ENCODE measurements at regions of chr12 and their contacts with region 1.

Region 1: DNA sequence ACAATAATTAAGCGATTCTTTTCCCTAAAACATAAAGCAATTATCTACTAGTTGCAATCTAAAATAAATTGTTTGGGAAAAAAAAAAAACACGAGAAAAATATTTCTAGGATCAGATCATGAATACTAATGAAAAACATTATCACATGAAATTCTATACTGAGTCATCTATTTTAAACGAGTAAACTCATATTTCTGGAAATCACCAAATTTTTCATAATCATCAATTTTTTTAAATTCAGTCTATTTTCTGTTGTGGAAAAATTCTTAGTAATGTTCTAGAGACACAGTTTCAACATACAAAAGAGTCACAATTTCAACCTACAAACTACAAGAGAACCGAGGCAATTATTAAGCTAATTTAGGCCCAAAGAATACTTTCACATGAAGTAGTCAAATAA is 245.6 kb upstream of the SOX5 start:
- DNase-seq: no peak
- ATAC-seq: no peak
- H3K4me3 ChIP-seq: no peak overlapping the region
- H3K27ac ChIP-seq: no peak overlapping the region
- H3K4me1 ChIP-seq: no peaks in the 10 kb centered on the region; the same call in 1 of the 2 replicates
- H3K27me3 ChIP-seq: no peaks in the 10 kb centered on the region
- CTCF ChIP-seq: no peak
- EP300 ChIP-seq: no peak
- POLR2A ChIP-seq: no peak
- RAD21 ChIP-seq: no peak

Region 2: GRCh38 chr12:24177889-24178288 is 17.2 kb before region 1 on chr12:
- CTCF ChIA-PET with region 1: interaction called, 3 read pairs
- POLR2A ChIA-PET with region 1: interaction called, 5 read pairs
- RAD21 ChIA-PET with region 1: interaction called, 4 read pairs
- SMC1A ChIA-PET with region 1: interaction called, 12 read pairs
- in situ Hi-C with region 1: no loop called
- intact Hi-C with region 1: loop called (anchors 2 kb)
- DNase-seq: peak; percentile 73
- ATAC-seq: peak; percentile 91
- H3K4me3 ChIP-seq: no peak overlapping the region
- H3K27ac ChIP-seq: no peak overlapping the region
- H3K4me1 ChIP-seq: peaks cover 6% of the 10 kb centered on the region
- H3K27me3 ChIP-seq: no peaks in the 10 kb centered on the region
- CTCF ChIP-seq: no peak
- EP300 ChIP-seq: peak; percentile 64 to 78; a peak in 3 of 4 replicates
- POLR2A ChIP-seq: no peak
- RAD21 ChIP-seq: no peak